K562 (cell line): ENCODE measurements at regions of chr10 and their contacts with region 1.

Region 1: DNA sequence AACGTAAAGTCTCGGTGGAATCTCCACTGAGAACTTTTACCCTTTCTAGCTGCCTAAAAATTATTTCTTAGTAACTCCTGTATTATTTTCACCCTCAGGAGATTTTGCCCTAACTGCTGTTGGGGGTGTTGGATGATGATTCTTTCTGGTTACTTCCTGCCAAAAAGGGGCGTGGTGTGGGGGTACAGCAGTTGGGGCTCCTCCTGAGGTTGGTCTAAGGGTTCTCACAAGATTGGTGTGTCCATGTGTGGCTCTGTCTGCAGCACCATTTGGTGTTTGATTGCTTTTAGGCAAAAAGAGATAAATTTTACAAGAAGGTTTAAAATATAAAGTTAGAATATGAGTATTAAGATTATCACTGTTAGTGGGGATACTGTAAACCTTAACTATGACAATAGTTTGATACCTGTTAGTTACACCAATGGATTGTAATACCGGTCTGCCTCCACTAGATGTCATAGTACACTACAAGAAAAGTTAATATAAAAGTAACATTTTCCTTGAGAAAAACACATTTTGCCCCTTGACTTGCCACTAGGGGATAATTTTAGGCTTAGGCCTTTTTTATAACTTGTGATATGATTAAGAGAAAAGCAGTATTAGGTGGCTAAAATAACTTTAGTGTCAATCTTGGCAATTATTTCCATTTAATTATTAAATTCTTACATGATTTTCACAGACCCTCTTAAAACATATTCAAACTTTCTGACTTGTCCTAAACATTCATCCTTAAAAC is 928.7 kb downstream of the IPMK start:
- DNase-seq: peak; percentile 13 to 43 (median 38)
- ATAC-seq: no peak
- H3K4me3 ChIP-seq: no peak overlapping the region
- H3K27ac ChIP-seq: no peak overlapping the region
- H3K4me1 ChIP-seq: no peaks in the 10 kb centered on the region
- H3K27me3 ChIP-seq: no peaks in the 10 kb centered on the region
- CTCF ChIP-seq: peak in 2 of 3 experiments; percentile 58 to 63; a peak in 4 of 6 replicates
- EP300 ChIP-seq: no peak
- POLR2A ChIP-seq: no peak
- RAD21 ChIP-seq: peak; percentile 48 to 69; a peak in 3 of 4 replicates

Region 2: DNA sequence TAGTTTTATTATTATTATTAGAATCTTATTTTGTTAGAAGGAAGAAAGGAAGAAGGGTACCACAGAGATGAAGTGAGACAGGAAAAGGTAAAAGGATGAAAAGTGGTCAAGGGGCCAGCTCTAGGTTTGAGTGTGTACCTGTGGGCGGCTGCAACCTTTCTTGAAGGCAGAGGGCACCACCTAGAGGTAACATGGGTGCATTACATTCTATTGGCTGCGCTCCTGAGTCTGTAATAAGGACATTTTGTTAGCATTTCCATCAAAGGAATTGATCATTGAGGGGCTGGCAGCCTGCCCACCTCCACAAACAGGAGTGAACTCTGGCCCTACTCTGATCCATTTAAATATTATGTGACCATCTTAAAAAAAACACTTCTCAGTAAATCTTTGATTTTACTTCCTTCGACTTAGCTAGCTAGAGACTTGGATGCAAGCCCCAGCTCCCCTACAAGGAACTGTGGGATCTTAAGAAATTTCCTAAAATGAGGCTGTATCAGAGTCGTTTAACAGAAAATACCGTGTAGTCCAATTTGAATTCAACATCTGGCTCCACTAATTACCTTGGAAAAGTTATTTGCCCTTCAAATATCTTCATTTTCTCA is 318.3 kb after region 1 on chr10:
- CTCF ChIA-PET with region 1: no interaction called
- POLR2A ChIA-PET with region 1: no interaction called
- in situ Hi-C with region 1: no loop called
- intact Hi-C with region 1: loop called (anchors 2 kb)
- DNase-seq: peak; percentile 42 to 57 (median 46)
- ATAC-seq: peak; percentile 72
- H3K4me3 ChIP-seq: no peak overlapping the region
- H3K27ac ChIP-seq: no peak overlapping the region
- H3K4me1 ChIP-seq: no peaks in the 10 kb centered on the region
- H3K27me3 ChIP-seq: no peaks in the 10 kb centered on the region
- CTCF ChIP-seq: peak; percentile 53 to 68 (median 67)
- EP300 ChIP-seq: no peak
- POLR2A ChIP-seq: no peak
- RAD21 ChIP-seq: peak; percentile 65 to 72

Region 3: DNA sequence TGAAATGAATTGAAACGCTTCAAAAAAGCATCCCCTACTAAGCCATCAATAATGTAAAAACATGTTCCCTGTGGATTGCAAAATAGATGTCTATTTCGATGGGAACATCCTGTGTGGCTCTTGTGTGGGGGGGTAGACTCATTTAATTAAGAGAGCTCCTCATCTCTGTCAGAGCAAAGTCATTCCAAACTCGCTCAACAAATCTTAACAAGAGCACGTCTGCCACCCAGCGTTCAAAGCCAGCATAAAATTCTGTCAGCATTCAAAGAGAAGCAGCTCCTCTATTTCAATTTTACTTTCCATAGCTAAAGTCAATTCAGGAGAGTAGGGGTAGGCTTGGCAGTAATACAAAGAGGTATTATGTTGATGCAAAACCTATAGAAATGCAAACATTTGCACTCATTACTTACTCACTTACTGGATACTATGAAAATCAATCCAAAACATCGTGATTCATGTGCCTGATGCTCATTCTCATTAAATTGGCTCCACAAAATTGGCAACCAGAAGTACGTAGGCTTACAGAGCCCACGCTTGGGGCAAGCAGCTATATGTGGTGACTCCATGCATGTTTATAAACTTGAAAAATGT is 813.8 kb after region 1 on chr10:
- CTCF ChIA-PET with region 1: no interaction called
- POLR2A ChIA-PET with region 1: no interaction called
- in situ Hi-C with region 1: loop called (anchors 25 kb)
- intact Hi-C with region 1: loop called (anchors 1 kb)
- DNase-seq: peak; percentile 25 to 62 (median 40)
- ATAC-seq: peak; percentile 57; the same call in 2 of the 3 replicates
- H3K4me3 ChIP-seq: no peak overlapping the region
- H3K27ac ChIP-seq: no peak overlapping the region
- H3K4me1 ChIP-seq: no peaks in the 10 kb centered on the region
- H3K27me3 ChIP-seq: no peaks in the 10 kb centered on the region
- CTCF ChIP-seq: peak; percentile 42 to 61 (median 58); a peak in 5 of 6 replicates
- EP300 ChIP-seq: no peak
- POLR2A ChIP-seq: no peak
- RAD21 ChIP-seq: peak; percentile 65 to 70